Activated T-helper 2 cell treated with anti-CD3 and anti-CD28 coated beads, Interferon-gamma antibody, Interleukin-2, Interleukin-4, amounts not matched to agents 10 μg/mL and 5 μg/mL and 100 μg/mL, durations not matched to agents 14 hours and 24 hours and 36 hours (primary cell): ENCODE measurements at regions of chr12 and their contacts with region 1.

Region 1: GRCh38 chr12:31959161-31959700 is at the start of gene RESF1:
- DNase-seq: peak; percentile 88
- H3K4me3 Mint-ChIP-seq: peak within 1 kb of the TSS; percentile 93
- H3K27ac Mint-ChIP-seq: peak within 1 kb of the TSS; percentile 98
- H3K4me1 Mint-ChIP-seq: peaks cover 63% of the 10 kb centered on the region
- H3K27me3 Mint-ChIP-seq: no peaks in the 10 kb centered on the region
- total RNA-seq, gene RESF1: 41.9 and 43.2 TPM in 2 replicates

Region 2: GRCh38 chr12:31325877-31326631 is 633.2 kb before region 1 on chr12 and contains the start of gene SINHCAF:
- intact Hi-C with region 1: loop called (anchors 1 kb)
- DNase-seq: peak; percentile 98
- H3K4me3 Mint-ChIP-seq: peak within 1 kb of the TSS; percentile 98
- H3K27ac Mint-ChIP-seq: peak within 1 kb of the TSS; percentile 99
- H3K4me1 Mint-ChIP-seq: peaks cover 17% of the 10 kb centered on the region
- H3K27me3 Mint-ChIP-seq: peaks cover 7% of the 10 kb centered on the region
- total RNA-seq, gene SINHCAF: 223 and 231 TPM in 2 replicates

Region 3: DNA sequence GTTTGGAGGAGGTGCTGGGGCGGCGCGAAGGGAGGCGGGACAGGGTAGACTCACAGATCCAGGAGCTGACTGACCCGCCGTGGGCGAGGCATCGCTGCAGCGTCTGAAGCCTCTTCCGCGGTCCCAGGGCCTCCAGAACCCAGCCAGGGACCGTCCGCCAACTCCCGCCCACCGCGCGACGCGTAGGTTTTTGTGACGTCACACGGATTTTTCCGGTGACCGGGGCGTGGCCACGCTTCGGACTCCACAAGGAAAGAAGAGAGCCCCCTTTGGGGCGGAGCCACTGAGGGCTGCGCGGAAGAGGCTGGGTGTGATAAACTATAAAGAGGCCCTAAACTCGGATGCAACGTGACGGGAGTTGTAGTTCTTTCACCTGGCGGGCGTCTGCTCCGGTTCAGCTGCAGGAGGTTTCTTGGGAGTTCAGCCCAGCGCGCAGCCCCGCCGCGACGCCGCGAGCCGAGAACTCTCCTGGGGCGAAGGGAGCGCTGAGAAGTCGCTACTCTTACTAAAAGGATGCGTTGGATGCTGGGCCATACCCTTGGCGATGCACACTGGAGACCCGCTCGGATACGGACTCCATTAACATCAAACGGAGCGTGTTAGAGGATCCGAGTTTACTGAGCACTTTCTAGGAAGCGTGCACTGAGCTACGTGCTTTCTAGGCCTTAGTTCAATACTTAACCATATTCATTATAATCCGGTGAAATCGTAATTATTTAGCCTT is 230.2 kb before region 1 on chr12 and contains the start of gene AMN1:
- intact Hi-C with region 1: loop called (anchors 1 kb)
- DNase-seq: peak; percentile 100
- H3K4me3 Mint-ChIP-seq: peak within 1 kb of the TSS; percentile 98
- H3K27ac Mint-ChIP-seq: peak within 1 kb of the TSS; percentile 99
- H3K4me1 Mint-ChIP-seq: peaks cover 35% of the 10 kb centered on the region
- H3K27me3 Mint-ChIP-seq: no peaks in the 10 kb centered on the region
- total RNA-seq, gene AMN1: 1.8 and 2.8 TPM in 2 replicates

Region 4: DNA sequence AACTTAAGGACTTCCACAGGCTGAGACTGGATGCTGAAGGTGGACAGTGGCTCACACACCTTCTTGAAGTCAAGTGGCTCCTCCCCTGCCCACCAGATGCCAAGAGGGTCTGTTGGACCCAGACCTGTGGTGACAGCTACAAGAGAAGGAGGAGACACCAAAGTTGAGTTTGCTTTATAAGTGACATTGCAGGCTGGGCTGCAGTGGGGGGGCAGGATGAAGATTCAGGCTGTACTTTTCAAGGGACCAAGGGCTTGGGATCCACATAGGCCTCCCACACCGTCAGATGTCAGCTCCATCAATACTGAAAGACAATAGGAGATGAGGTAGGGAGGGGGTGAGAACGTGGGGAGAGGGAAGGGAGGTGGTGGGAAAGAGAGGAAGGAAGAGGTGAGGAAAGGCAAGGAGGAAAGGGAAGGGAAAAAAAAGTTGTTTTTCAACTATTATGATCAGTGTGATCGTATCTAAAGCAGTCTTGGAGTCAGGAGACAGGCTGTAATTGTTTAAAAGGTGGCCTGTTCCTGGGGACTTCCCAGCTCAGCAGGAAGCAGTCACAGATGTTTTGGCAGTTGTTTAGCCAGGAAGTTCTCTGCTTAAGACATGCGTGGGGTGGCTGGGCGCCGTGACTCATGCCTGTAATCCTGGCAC is 84.1 kb before region 1 on chr12:
- intact Hi-C with region 1: loop called (anchors 1 kb)
- DNase-seq: peak; percentile 35
- H3K4me3 Mint-ChIP-seq: no peak overlapping the region
- H3K27ac Mint-ChIP-seq: peak overlapping the region; percentile 100
- H3K4me1 Mint-ChIP-seq: peaks cover 19% of the 10 kb centered on the region
- H3K27me3 Mint-ChIP-seq: no peaks in the 10 kb centered on the region

Region 5: DNA sequence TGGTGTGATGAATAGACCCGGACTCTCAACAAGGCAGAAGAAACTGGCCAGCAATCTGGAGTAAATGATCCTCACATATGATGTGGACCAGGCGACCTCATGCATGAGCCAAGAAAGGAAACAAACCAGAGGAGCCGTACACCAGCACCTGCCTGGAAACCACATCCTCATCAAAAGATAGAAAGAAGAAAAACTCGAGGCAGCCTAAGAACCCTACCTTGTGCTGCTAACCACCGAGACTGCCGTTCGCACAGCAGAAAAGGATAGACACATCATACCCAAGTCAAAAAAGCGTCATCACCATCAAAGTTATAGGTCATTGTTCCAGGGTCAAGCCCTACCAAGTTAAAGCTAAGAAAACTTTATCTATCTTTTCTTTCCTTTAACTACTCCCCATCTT is 66.7 kb after region 1 on chr12:
- intact Hi-C with region 1: loop called (anchors 2 kb)
- DNase-seq: peak; percentile 61
- H3K4me3 Mint-ChIP-seq: no peak overlapping the region
- H3K27ac Mint-ChIP-seq: peak overlapping the region; percentile 66
- H3K4me1 Mint-ChIP-seq: peaks cover 23% of the 10 kb centered on the region
- H3K27me3 Mint-ChIP-seq: no peaks in the 10 kb centered on the region

Region 6: GRCh38 chr12:32312049-32312670 is 352.9 kb after region 1 on chr12:
- intact Hi-C with region 1: loop called (anchors 2 kb)
- DNase-seq: no peak
- H3K4me3 Mint-ChIP-seq: no peak overlapping the region
- H3K27ac Mint-ChIP-seq: no peak overlapping the region
- H3K4me1 Mint-ChIP-seq: peaks cover 2% of the 10 kb centered on the region
- H3K27me3 Mint-ChIP-seq: peaks cover 5% of the 10 kb centered on the region

Region 7: DNA sequence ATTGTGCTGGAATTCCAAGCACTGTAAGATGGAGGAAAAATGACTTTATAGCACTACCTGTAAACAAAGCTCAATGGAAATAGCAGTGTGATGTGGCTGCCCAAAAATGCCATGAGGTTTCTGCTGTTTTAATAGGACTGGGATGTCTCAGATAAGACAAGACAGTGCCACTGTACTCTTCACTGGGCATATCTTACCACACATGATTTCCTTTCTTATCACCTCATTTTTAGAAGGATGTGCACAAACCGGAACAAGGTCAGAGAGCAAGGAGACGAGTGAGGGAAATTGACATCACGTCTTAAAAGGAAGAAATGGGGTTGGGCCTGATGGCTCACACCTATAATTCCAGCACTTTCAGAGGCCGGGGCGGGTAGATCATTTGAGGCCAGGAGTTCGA is 401.7 kb after region 1 on chr12:
- intact Hi-C with region 1: no loop called
- DNase-seq: no peak
- H3K4me3 Mint-ChIP-seq: no peak overlapping the region
- H3K27ac Mint-ChIP-seq: no peak overlapping the region
- H3K4me1 Mint-ChIP-seq: no peaks in the 10 kb centered on the region
- H3K27me3 Mint-ChIP-seq: no peaks in the 10 kb centered on the region